H1 (cell line): ENCODE measurements at regions of chr7 and their contacts with region 1.

Region 1: GRCh38 chr7:156665101-156665500 is 24.5 kb downstream of the RNF32 start:
- DNase-seq: no peak
- H3K4me3 ChIP-seq: no peak overlapping the region
- H3K27ac ChIP-seq: no peak overlapping the region
- H3K4me1 ChIP-seq: peaks cover 2 to 13% (median 9%) of the 10 kb centered on the region in 4 experiments; a peak in 6 of 7 replicates
- H3K27me3 ChIP-seq: no peaks in the 10 kb centered on the region
- CTCF ChIP-seq: no peak
- EP300 ChIP-seq: peak in 1 of 2 experiments; percentile 33; a peak in 1 of 3 replicates
- POLR2A ChIP-seq: no peak
- RAD21 ChIP-seq: no peak

Region 2: DNA sequence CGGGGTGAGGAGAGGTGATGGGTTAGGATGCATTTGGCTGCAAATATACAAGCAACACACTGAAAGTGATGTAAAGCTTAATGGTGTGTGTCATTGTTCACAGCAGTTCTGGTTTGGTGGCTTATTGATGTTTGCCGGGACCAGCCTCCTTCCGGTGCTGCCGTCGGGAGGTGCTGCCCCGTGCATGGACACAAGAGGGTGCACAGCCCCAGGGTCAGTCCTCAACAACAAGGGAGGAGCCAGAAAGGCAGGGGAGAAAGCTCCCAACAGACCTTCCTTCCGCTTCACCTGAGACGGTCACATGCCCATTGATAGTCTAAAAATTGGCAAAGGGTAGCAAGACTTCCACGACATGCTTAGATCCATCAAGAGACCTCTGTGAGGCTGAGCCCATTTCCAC is 15.1 kb before region 1 on chr7:
- CTCF ChIA-PET with region 1: interaction called, 6 read pairs
- POLR2A ChIA-PET with region 1: interaction called, 15 read pairs
- DNase-seq: no peak
- H3K4me3 ChIP-seq: no peak overlapping the region
- H3K27ac ChIP-seq: no peak overlapping the region
- H3K4me1 ChIP-seq: peaks cover 0 to 3% (median 0%) of the 10 kb centered on the region in 4 experiments; a peak in 1 of 7 replicates
- H3K27me3 ChIP-seq: no peaks in the 10 kb centered on the region
- CTCF ChIP-seq: peak; percentile 68 to 84 (median 80)
- EP300 ChIP-seq: no peak
- POLR2A ChIP-seq: no peak
- RAD21 ChIP-seq: peak; percentile 76 to 83

Region 3: GRCh38 chr7:156703773-156704482 is 38.8 kb after region 1 on chr7:
- CTCF ChIA-PET with region 1: no interaction called
- POLR2A ChIA-PET with region 1: no interaction called
- DNase-seq: no peak
- H3K4me3 ChIP-seq: no peak overlapping the region
- H3K27ac ChIP-seq: no peak overlapping the region
- H3K4me1 ChIP-seq: no peaks in the 10 kb centered on the region
- H3K27me3 ChIP-seq: no peaks in the 10 kb centered on the region
- CTCF ChIP-seq: no peak
- EP300 ChIP-seq: no peak
- POLR2A ChIP-seq: no peak
- RAD21 ChIP-seq: no peak